Mammary epithelial cell (primary cell): ENCODE measurements at regions of chr1 and their contacts with region 1.

Region 1: GRCh38 chr1:226201029-226201593 is 14.6 kb upstream of the ACBD3 start:
- DNase-seq: no peak
- H3K4me3 ChIP-seq: no peak overlapping the region
- H3K27ac ChIP-seq: no peak overlapping the region
- H3K4me1 ChIP-seq: no peaks in the 10 kb centered on the region
- H3K27me3 ChIP-seq: no peaks in the 10 kb centered on the region
- CTCF ChIP-seq: peak; percentile 25 to 50

Region 2: GRCh38 chr1:226017070-226017469 is 184.0 kb before region 1 on chr1:
- CTCF ChIA-PET with region 1: no interaction called
- dilution Hi-C with region 1: no loop called
- in situ Hi-C with region 1: no loop called
- intact Hi-C with region 1: no loop called
- DNase-seq: no peak
- H3K4me3 ChIP-seq: no peak overlapping the region
- H3K27ac ChIP-seq: no peak overlapping the region
- H3K4me1 ChIP-seq: no peaks in the 10 kb centered on the region
- H3K27me3 ChIP-seq: no peaks in the 10 kb centered on the region
- CTCF ChIP-seq: no peak

Region 3: GRCh38 chr1:226062558-226063223 is 138.4 kb before region 1 on chr1 and contains the start of gene H3-3A:
- CTCF ChIA-PET with region 1: no interaction called
- dilution Hi-C with region 1: no loop called
- in situ Hi-C with region 1: no loop called
- intact Hi-C with region 1: loop called (anchors 2 kb)
- DNase-seq: peak; percentile 92
- H3K4me3 ChIP-seq: peak within 1 kb of the TSS; percentile 86 to 99 (median 91)
- H3K27ac ChIP-seq: peak within 1 kb of the TSS; percentile 86
- H3K4me1 ChIP-seq: peaks cover 19% of the 10 kb centered on the region
- H3K27me3 ChIP-seq: no peaks in the 10 kb centered on the region
- CTCF ChIP-seq: peak in 1 of 2 donors; percentile 13
- total RNA-seq, gene H3-3A: 209 to 262 TPM

Region 4: DNA sequence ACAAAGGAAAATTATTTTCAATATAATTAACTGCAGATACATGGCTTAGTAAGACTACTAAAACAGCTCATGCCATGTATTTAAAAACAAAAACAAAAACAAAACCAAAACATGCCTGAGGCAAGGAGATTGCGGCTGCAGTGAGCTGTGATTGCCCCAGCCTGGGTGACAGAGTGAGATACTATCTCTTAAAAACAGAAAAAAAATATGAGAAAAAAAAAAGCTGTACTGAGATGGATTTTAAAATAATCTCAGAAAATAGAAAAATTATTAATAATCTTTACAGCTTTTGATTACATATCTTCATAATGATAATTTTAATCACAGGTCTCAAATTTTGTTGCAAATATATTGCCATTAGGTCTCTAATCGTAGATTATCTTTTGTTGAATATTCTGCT is 131.8 kb after region 1 on chr1:
- CTCF ChIA-PET with region 1: interaction called, 4 read pairs
- dilution Hi-C with region 1: no loop called
- in situ Hi-C with region 1: no loop called
- intact Hi-C with region 1: loop called (anchors 1 kb)
- DNase-seq: no peak
- H3K4me3 ChIP-seq: no peak overlapping the region
- H3K27ac ChIP-seq: no peak overlapping the region
- H3K4me1 ChIP-seq: no peaks in the 10 kb centered on the region
- H3K27me3 ChIP-seq: no peaks in the 10 kb centered on the region
- CTCF ChIP-seq: no peak

Region 5: DNA sequence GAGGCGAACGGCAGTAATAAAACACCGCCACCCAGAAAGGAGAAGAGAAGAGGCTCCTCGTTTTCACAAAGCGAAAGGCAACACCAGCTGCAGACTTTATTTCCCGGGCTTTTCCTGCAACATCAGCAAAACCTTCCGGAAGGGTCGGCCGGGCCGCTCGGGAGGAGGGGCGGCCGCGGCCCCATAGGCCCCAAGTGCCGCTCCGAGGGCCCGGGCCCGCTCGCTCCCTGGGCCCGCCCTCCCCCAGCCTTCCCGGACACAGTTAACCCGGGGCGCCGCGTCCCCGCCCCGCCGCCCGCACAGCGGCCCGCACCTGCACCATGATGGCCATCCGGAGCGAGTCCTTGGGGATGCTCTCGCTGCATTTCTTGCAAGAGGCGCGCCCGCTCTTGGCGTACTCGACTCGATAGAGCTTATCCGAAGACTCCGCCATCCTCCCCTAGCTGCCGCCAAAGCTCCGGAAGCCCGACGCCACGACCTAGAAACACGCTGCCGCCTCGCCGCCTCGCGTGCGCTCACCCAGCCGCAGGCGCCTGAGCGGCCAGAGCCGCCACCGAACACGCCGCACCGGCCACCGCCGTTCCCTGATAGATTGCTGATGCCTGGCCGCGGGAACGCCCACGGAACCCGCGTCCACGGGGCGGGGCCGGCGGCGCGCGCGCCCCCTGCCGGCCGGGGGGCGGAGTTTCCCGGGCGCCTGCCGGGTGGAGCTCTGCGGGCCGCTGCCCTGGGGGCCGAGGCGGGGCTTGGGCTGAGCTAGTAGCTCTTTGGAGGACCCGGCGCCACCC is 206.6 kb after region 1 on chr1 and contains the start of gene PARP1:
- CTCF ChIA-PET with region 1: interaction called, 7 read pairs
- dilution Hi-C with region 1: no loop called
- in situ Hi-C with region 1: no loop called
- intact Hi-C with region 1: loop called (anchors 5 kb)
- DNase-seq: peak; percentile 79
- H3K4me3 ChIP-seq: peak within 1 kb of the TSS; percentile 75 to 83 (median 77)
- H3K27ac ChIP-seq: peak within 1 kb of the TSS; percentile 40
- H3K4me1 ChIP-seq: peaks cover 18% of the 10 kb centered on the region
- H3K27me3 ChIP-seq: no peaks in the 10 kb centered on the region
- CTCF ChIP-seq: peak; percentile 22 to 42
- total RNA-seq, gene PARP1: 67.7 to 80.8 TPM